ENCODE measurements at regions of chr19 and their contacts with region 1.

Region 1: DNA sequence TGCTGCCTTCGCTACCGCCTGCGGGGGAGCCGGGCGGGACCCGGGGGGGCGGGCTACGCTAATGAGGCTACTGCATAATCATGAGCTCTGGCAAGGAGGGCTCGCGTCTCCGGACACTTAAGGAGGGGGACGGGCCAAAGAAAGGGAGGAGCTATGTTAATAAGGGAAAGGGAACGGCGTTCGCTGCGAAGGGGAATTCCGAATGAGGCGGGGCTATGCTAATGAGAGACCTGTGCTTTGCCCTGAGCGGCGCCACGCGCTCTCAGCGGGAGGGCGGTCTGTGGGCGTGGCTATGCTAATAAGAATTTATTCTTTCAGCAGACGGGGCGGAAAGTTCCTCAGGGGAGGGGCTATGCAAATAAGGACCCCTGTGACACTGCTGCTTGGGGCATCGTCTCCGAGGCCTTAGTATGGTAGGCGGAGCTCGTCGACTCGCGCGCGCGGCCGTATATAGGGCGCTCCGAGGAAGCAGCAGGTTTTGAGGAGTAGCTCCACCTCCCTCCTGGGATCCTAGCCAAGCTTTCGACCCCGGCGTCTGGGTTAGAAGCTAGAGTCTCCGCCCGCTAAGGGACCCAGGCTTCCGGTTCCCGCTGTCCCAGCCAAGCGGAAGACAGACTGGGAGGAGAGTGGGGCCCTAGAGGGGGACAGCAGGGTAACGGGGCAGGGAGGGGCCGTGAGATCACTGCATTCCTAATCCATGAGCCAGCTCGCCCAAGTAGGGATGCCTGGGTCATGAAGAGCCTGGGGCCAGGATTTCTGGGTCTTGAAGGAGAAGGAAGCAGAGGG is at the start of gene RRAS:
- DNase-seq: peak; percentile 100
- H3K4me3 ChIP-seq: peak within 1 kb of the TSS; percentile 38 to 72 (median 66)
- H3K27ac ChIP-seq: peak within 1 kb of the TSS; percentile 93
- H3K4me1 ChIP-seq: peaks cover 2 to 27% (median 15%) of the 10 kb centered on the region in 4 experiments
- H3K27me3 ChIP-seq: no peaks in the 10 kb centered on the region
- CTCF ChIP-seq: no peak
- EP300 ChIP-seq: peak in 1 of 2 experiments; percentile 64; a peak in 2 of 3 replicates
- POLR2A ChIP-seq: peak in 1 of 2 experiments; percentile 63; a peak in 1 of 3 replicates
- RAD21 ChIP-seq: no peak
- total RNA-seq, gene RRAS: 16.9 and 17.7 TPM in 2 replicates

Region 2: GRCh38 chr19:49590071-49590970 is 50.0 kb before region 1 on chr19:
- CTCF ChIA-PET with region 1: interaction called, 4 read pairs
- POLR2A ChIA-PET with region 1: interaction called, 840 read pairs
- DNase-seq: peak; percentile 98 to 99
- H3K4me3 ChIP-seq: peak overlapping the region; percentile 83 to 100 (median 93)
- H3K27ac ChIP-seq: peak overlapping the region; percentile 84
- H3K4me1 ChIP-seq: peaks cover 4 to 10% (median 5%) of the 10 kb centered on the region in 4 experiments; a peak in 6 of 7 replicates
- H3K27me3 ChIP-seq: no peaks in the 10 kb centered on the region
- CTCF ChIP-seq: peak in 1 of 3 experiments; percentile 8; a peak in 1 of 4 replicates
- EP300 ChIP-seq: no peak
- POLR2A ChIP-seq: peak; percentile 81 to 90
- RAD21 ChIP-seq: no peak

Region 3: GRCh38 chr19:49624967-49625910 is 15.1 kb before region 1 on chr19:
- CTCF ChIA-PET with region 1: no interaction called
- POLR2A ChIA-PET with region 1: interaction called, 840 read pairs
- DNase-seq: no peak
- H3K4me3 ChIP-seq: no peak overlapping the region
- H3K27ac ChIP-seq: no peak overlapping the region
- H3K4me1 ChIP-seq: no peaks in the 10 kb centered on the region
- H3K27me3 ChIP-seq: no peaks in the 10 kb centered on the region
- CTCF ChIP-seq: no peak
- EP300 ChIP-seq: no peak
- POLR2A ChIP-seq: no peak
- RAD21 ChIP-seq: no peak

Measured in H1 (cell line).